MCF 10A (cell line): ENCODE measurements at regions of chr1 and their contacts with region 1.

Region 1: DNA sequence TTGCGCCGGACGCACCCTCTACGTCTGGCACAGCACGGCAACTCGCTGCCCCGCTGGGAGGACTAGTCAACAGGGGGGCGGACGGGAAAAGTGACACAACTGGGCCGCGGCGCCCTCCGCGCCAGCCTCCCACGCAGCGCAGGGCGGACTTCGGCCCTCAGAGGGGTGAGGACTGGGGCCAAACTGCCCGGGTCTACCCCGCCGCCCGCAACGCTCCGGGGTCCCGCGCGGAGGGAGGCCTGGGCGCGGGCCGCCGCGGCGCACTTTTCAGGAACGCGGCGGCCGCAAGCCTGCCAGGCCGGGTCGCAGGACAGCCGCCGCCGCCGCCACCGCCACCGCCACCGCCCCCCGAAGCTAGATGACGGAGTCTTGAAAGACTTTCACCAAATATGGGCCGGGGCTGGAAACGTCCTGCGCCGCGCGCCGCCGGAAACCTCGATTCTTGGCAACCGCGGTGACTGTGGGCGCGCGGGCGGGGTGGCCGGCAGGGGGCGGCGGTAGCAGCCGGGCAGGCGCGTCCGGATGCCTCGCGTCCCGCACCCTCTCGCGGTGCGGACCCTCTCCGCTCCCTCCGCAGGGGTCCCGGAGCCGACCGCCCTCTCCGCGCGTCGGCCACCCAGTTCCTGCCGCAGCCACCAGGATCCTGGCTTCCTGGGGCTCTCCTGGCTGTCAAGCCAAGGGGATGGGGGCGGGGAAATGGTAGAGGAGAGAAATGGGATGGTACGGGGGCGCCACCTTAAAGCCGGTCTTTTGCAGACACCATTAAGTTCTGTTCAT is 3.7 kb upstream of the CCN1 start:
- DNase-seq: peak; percentile 86
- H3K4me3 Mint-ChIP-seq: peak overlapping the region; percentile 77
- H3K27ac Mint-ChIP-seq: peak overlapping the region; percentile 94
- H3K4me1 Mint-ChIP-seq: peaks cover 35% of the 10 kb centered on the region
- H3K27me3 Mint-ChIP-seq: no peaks in the 10 kb centered on the region
- CTCF ChIP-seq: peak; percentile 84

Region 2: GRCh38 chr1:85307987-85308832 is 268.6 kb before region 1 on chr1:
- CTCF ChIA-PET with region 1: interaction called, 12 read pairs
- POLR2A ChIA-PET with region 1: no interaction called
- intact Hi-C with region 1: loop called (anchors 1 kb)
- DNase-seq: peak; percentile 90
- H3K4me3 Mint-ChIP-seq: no peak overlapping the region
- H3K27ac Mint-ChIP-seq: no peak overlapping the region
- H3K4me1 Mint-ChIP-seq: peaks cover 1% of the 10 kb centered on the region
- H3K27me3 Mint-ChIP-seq: no peaks in the 10 kb centered on the region
- CTCF ChIP-seq: peak; percentile 94

Region 3: GRCh38 chr1:85494904-85495266 is 81.9 kb before region 1 on chr1:
- CTCF ChIA-PET with region 1: interaction called, 16 read pairs
- POLR2A ChIA-PET with region 1: interaction called, 32 read pairs
- intact Hi-C with region 1: loop called (anchors 1 kb)
- DNase-seq: peak; percentile 79
- H3K4me3 Mint-ChIP-seq: no peak overlapping the region
- H3K27ac Mint-ChIP-seq: peak overlapping the region; percentile 96
- H3K4me1 Mint-ChIP-seq: peaks cover 23% of the 10 kb centered on the region
- H3K27me3 Mint-ChIP-seq: no peaks in the 10 kb centered on the region
- CTCF ChIP-seq: peak; percentile 61

Region 4: GRCh38 chr1:85612704-85613361 is 36.0 kb after region 1 on chr1:
- CTCF ChIA-PET with region 1: interaction called, 9 read pairs
- POLR2A ChIA-PET with region 1: interaction called, 27 read pairs
- intact Hi-C with region 1: loop called (anchors 1 kb)
- DNase-seq: peak; percentile 59
- H3K4me3 Mint-ChIP-seq: no peak overlapping the region
- H3K27ac Mint-ChIP-seq: peak overlapping the region; percentile 68
- H3K4me1 Mint-ChIP-seq: peaks cover 30% of the 10 kb centered on the region
- H3K27me3 Mint-ChIP-seq: no peaks in the 10 kb centered on the region
- CTCF ChIP-seq: peak; percentile 38

Region 5: GRCh38 chr1:85707990-85708828 is 131.4 kb after region 1 on chr1 and contains the start of gene ZNHIT6:
- CTCF ChIA-PET with region 1: interaction called, 4 read pairs
- POLR2A ChIA-PET with region 1: interaction called, 4 read pairs
- intact Hi-C with region 1: loop called (anchors 1 kb)
- DNase-seq: peak; percentile 96
- H3K4me3 Mint-ChIP-seq: no peak within 1 kb of the TSS
- H3K27ac Mint-ChIP-seq: no peak within 1 kb of the TSS
- H3K4me1 Mint-ChIP-seq: peaks cover 13% of the 10 kb centered on the region
- H3K27me3 Mint-ChIP-seq: no peaks in the 10 kb centered on the region
- CTCF ChIP-seq: peak; percentile 32
- total RNA-seq, gene ZNHIT6: 24.7 and 31.3 TPM in 2 replicates

Region 6: GRCh38 chr1:85865213-85865612 is 288.4 kb after region 1 on chr1:
- CTCF ChIA-PET with region 1: no interaction called
- POLR2A ChIA-PET with region 1: no interaction called
- intact Hi-C with region 1: no loop called
- DNase-seq: peak; percentile 27
- H3K4me3 Mint-ChIP-seq: no peak overlapping the region
- H3K27ac Mint-ChIP-seq: peak overlapping the region; percentile 3
- H3K4me1 Mint-ChIP-seq: peaks cover 6% of the 10 kb centered on the region
- H3K27me3 Mint-ChIP-seq: peaks cover 2% of the 10 kb centered on the region
- CTCF ChIP-seq: no peak

Region 7: DNA sequence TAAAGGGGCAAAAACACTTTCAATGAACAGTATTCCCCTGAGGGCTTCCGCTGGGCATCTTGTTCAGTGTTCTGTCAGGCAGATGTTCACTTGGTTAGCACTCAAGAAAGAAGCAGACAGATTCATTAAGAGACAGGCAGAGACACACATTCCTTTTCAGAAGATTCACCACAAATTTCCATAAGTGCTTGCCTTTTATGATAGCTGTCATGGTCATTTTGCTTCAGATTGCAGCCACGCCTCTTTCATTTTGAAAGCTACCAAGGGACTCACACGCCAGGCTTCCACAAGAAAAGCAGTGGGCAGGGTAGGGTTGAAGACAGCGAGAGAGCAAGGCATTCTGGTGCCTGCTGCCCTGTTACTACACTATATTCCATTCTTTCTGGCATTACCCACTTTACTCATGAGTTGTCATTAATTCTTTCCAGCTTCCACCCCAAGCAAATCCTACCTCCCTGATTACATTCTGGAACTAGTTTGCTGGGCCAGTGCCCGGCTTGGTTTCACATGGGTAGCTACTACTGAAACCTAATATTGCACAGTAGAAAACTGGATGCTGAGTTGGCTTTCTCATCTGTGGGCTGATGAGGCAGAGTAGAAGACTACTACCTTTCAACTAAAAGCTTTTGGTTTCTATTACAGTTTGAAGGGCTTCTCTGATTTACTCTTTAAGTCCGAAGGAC is 670.9 kb after region 1 on chr1:
- CTCF ChIA-PET with region 1: no interaction called
- POLR2A ChIA-PET with region 1: no interaction called
- intact Hi-C with region 1: no loop called
- DNase-seq: no peak
- H3K4me3 Mint-ChIP-seq: no peak overlapping the region
- H3K27ac Mint-ChIP-seq: no peak overlapping the region
- H3K4me1 Mint-ChIP-seq: no peaks in the 10 kb centered on the region
- H3K27me3 Mint-ChIP-seq: peaks cover 11% of the 10 kb centered on the region
- CTCF ChIP-seq: no peak